Mammary epithelial cell (primary cell): ENCODE measurements at regions of chr2 and their contacts with region 1.

Region 1: DNA sequence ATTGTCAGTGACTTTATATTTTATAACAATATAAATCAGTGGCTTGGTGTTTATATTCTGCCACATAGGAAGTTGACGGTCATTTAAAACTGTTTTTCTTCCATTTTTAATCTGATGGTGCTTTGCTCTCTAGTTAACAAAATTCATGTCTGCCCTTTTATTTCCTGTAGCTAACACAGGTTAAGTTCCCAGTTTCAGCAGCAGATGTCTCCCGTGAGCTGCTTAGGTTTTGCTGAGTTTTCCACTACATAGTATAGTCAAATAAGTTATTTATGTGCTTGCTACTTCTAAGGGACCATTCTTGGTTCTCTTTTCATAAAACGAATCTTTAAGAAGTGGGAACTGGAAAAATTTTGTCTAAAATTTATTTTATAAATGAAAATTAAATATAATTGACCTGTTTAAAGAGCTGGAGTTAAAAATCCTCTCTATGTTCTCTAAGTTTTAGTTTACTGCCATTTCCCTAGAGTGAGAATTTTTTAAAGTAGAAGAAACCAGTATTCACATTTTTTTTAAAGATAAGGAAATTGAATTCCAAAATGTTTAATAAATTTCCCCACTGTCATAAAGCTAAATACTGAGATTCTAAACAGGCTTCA is 20.6 kb downstream of the HTR2B start:
- DNase-seq: peak; percentile 31
- H3K4me3 ChIP-seq: no peak overlapping the region
- H3K27ac ChIP-seq: no peak overlapping the region
- H3K4me1 ChIP-seq: peaks cover 5% of the 10 kb centered on the region
- H3K27me3 ChIP-seq: no peaks in the 10 kb centered on the region
- CTCF ChIP-seq: peak; percentile 81 to 82

Region 2: GRCh38 chr2:230938098-230938497 is 166.1 kb before region 1 on chr2:
- CTCF ChIA-PET with region 1: interaction called, 26 read pairs
- dilution Hi-C with region 1: no loop called
- in situ Hi-C with region 1: no loop called
- intact Hi-C with region 1: no loop called
- DNase-seq: no peak
- H3K4me3 ChIP-seq: no peak overlapping the region
- H3K27ac ChIP-seq: no peak overlapping the region
- H3K4me1 ChIP-seq: no peaks in the 10 kb centered on the region
- H3K27me3 ChIP-seq: no peaks in the 10 kb centered on the region
- CTCF ChIP-seq: no peak

Region 3: DNA sequence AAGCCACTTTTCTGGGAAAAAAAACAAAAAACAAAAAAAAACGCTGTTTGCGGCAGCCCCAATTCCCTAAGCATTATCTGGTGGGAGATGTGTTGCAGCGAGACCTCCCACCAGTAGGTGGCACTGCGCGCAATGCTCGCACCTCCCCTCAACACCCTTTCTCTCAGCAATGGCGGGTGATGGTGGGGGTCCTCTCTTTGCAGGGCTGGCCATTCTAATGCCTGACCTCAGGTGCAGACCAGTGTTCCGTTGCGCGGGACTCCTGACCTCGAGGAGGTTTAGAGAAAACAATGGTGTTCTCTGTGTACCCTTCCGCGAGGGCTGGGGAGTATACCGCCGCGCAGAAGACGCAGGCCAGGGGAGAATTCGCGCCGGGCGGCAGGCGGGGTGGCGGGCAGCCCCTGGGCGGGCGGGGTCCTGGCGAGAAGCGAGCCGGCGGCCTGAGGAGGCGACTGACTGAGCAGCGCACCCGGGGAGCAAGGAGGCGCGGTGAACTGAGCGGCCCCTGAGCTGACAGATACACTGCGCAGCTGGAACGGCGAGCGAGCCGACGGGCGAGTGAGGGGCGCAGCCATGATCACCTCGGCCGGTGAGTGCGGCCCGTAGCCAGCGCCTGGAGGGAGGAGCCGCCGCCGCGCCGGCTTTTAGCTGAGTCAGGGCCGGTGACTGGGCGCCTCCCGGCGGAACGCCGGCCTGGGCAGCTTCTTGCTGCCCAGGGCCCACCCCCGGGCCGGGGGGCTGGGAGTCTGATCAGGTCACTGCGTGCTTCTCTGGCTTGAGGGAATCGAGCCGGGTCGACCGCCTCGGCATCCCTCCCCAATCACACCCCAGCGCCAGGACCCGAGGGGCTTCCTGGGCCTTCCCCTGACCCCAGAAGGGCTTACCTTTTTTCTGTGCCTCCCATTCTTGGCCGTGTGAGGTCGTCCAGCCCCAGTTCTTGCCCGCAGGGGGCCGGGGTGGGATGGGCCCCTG is 47.5 kb before region 1 on chr2 and contains the start of gene PSMD1:
- CTCF ChIA-PET with region 1: no interaction called
- dilution Hi-C with region 1: no loop called
- in situ Hi-C with region 1: no loop called
- intact Hi-C with region 1: no loop called
- DNase-seq: peak; percentile 82
- H3K4me3 ChIP-seq: peak within 1 kb of the TSS; percentile 54 to 92 (median 66)
- H3K27ac ChIP-seq: peak within 1 kb of the TSS; percentile 91
- H3K4me1 ChIP-seq: peaks cover 33% of the 10 kb centered on the region
- H3K27me3 ChIP-seq: no peaks in the 10 kb centered on the region
- CTCF ChIP-seq: peak; percentile 95 to 97
- total RNA-seq, gene PSMD1: 114 to 149 TPM

Region 4: GRCh38 chr2:231132126-231132525 is 27.9 kb after region 1 on chr2:
- CTCF ChIA-PET with region 1: no interaction called
- dilution Hi-C with region 1: loop called (anchors 5 kb)
- in situ Hi-C with region 1: no loop called
- intact Hi-C with region 1: no loop called
- DNase-seq: no peak
- H3K4me3 ChIP-seq: no peak overlapping the region
- H3K27ac ChIP-seq: no peak overlapping the region
- H3K4me1 ChIP-seq: no peaks in the 10 kb centered on the region
- H3K27me3 ChIP-seq: no peaks in the 10 kb centered on the region
- CTCF ChIP-seq: no peak

Region 5: DNA sequence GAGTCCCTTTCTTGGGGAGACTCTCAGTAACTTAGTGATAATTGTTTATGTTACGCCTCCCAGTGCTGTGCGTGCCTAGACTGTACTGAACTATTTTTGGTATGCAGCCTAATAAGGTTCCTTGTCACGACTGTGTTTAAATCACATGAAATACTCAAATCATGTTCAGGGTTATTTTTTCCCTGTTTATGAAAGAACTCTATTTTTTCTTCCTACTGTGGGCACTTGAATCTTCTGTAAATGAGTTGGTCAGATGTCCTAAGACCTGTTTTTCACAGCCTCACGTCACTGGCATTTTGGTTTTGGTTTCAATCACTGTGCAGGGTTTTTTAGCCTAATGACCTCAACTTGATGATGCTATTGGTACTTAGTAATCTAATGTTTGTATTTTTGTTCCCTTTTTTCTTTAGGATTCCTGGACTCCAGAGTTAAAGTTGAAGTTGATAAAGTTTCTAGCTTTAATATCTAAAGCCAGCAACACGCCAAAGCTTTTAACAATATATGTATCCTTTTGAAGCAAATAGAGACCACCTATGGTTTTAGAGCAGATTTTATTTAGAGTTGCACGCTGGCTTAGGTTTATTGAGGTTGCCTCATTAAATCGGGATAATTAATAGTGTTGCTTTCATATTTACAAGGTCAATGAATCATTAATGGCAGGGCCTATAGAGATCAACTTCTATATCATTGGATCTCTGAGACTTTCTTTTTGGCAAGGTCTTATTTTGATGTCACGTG is 118.3 kb after region 1 on chr2:
- CTCF ChIA-PET with region 1: interaction called, 3 read pairs
- dilution Hi-C with region 1: no loop called
- in situ Hi-C with region 1: no loop called
- intact Hi-C with region 1: loop called (anchors 1 kb)
- DNase-seq: no peak
- H3K4me3 ChIP-seq: no peak overlapping the region
- H3K27ac ChIP-seq: peak overlapping the region; percentile 52
- H3K4me1 ChIP-seq: peaks cover 6% of the 10 kb centered on the region
- H3K27me3 ChIP-seq: no peaks in the 10 kb centered on the region
- CTCF ChIP-seq: no peak

Region 6: DNA sequence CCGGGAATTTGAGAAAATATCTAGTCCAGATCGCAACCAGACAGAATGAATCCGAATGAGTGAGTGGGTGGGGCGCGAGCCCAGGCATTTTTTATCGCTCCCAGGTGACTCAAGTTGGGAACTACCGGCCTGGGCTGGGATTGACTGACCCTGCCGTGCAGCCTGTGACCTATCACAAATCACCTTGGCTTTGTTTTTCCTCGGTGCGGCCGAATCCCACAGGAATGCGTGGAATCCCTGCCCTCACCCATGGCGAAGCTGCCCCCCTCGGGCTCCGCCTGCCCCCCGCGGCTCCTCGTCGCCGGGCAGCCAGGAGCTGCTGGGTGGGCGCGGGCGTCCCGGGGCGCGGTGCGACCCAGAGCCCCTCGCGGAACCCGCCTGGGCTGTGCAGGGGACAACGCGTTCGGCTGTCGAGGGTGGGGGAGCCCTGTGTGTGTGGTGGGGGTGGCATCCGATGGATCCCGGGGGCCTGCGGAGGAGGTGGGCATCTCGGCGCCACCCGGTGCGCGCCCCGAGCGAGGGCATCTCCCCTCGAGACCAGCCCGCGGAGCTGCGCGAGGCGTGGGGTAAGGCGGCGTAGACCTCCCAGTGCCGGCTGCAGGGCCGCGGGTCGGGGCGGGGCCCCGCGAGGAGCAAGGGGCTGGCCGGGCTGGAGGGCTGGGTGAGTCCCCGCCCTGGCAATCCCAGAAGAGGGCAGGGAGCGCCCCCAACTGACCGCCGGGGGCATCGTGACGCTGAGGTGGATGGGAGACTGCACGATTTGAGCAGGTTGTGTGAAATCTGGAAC is 307.8 kb after region 1 on chr2:
- CTCF ChIA-PET with region 1: no interaction called
- dilution Hi-C with region 1: no loop called
- in situ Hi-C with region 1: loop called in 1 of 2 experiments (anchors 10 kb)
- intact Hi-C with region 1: loop called (anchors 1 kb)
- DNase-seq: peak; percentile 75
- H3K4me3 ChIP-seq: peak overlapping the region; percentile 59 to 68 (median 61)
- H3K27ac ChIP-seq: peak overlapping the region; percentile 48
- H3K4me1 ChIP-seq: peaks cover 12% of the 10 kb centered on the region
- H3K27me3 ChIP-seq: no peaks in the 10 kb centered on the region
- CTCF ChIP-seq: peak; percentile 91

Region 7: GRCh38 chr2:231452799-231453508 is 348.7 kb after region 1 on chr2:
- CTCF ChIA-PET with region 1: no interaction called
- dilution Hi-C with region 1: no loop called
- in situ Hi-C with region 1: no loop called
- intact Hi-C with region 1: loop called (anchors 2 kb)
- DNase-seq: no peak
- H3K4me3 ChIP-seq: no peak overlapping the region
- H3K27ac ChIP-seq: no peak overlapping the region
- H3K4me1 ChIP-seq: no peaks in the 10 kb centered on the region
- H3K27me3 ChIP-seq: no peaks in the 10 kb centered on the region
- CTCF ChIP-seq: no peak